ENCODE measurements at regions of chr11 and their contacts with region 1.

Region 1: DNA sequence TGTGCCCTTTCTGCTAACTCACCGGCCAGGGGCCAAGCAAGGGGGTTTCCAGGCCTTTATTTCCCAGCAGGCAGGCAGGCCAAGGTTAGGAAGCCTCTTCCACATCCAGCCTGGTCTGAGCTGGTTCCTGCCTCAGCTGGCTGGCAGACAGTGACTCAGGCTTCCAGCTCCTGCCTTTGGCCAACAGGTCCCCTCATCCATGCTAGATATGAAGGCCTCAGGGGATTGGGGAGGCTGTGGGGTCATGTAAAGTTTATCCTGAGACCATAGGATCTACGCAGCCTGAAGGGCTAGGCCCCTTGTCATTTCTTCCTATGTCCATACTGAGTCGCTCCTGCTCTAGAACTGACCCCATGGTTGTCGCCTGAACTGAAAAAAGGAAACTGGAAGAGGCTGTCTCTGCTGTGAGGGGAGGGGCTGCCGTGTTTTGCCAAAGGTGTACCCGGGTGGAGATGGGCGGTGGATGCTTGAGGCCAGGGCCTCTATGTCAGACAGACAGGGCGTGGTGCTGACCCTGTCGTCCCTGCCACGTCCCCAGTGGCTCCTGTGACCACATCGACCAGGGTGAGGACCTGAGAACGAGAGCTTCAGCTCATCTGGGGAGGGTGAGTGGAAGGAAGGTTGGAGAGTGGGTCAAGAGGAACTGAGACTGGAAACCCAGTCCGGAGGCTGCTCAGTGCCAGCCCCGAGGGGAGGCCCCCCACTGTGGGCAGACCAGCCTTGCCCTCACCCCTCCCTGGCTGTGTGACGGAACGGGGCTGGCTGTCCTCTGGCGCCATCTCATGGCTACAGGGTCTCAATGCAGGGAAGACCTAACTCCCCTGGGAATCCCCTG is 17.0 kb downstream of the P2RY6 start:
- DNase-seq: peak in 1 of 2 experiments; percentile 93
- H3K4me3 ChIP-seq: no peak overlapping the region
- H3K27ac ChIP-seq: no peak overlapping the region
- H3K4me1 ChIP-seq: peaks cover 0 to 8% (median 1%) of the 10 kb centered on the region in 4 experiments; a peak in 5 of 7 replicates
- H3K27me3 ChIP-seq: peaks cover 0 to 10% (median 3%) of the 10 kb centered on the region in 4 experiments; a peak in 5 of 7 replicates
- CTCF ChIP-seq: peak; percentile 97 to 98 (median 97)
- EP300 ChIP-seq: no peak
- POLR2A ChIP-seq: no peak
- RAD21 ChIP-seq: peak; percentile 98 to 99

Region 2: DNA sequence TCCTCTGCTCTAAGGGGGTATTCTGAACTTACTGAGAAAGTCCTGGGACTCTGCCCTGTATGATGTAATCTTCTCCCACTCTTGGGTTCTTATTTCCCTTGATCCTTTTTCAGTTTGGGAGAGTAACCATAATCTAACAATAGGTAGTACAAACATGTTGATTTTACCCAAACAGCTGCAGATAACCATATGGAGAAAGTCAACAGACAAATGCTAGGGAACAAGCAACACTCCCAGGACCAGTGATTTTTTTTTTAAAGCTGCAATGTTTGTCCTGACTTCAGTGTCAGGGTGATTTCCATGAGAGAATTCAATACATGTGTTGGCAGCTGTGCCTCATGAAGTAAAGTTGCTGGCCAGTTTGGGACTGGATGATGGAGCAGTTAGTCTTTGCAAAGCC is 303.4 kb before region 1 on chr11:
- CTCF ChIA-PET with region 1: no interaction called
- POLR2A ChIA-PET with region 1: no interaction called
- DNase-seq: no peak
- H3K4me3 ChIP-seq: no peak overlapping the region
- H3K27ac ChIP-seq: no peak overlapping the region
- H3K4me1 ChIP-seq: peaks cover 0 to 2% (median 0%) of the 10 kb centered on the region in 4 experiments; a peak in 1 of 7 replicates
- H3K27me3 ChIP-seq: no peaks in the 10 kb centered on the region
- CTCF ChIP-seq: no peak
- EP300 ChIP-seq: no peak
- POLR2A ChIP-seq: no peak
- RAD21 ChIP-seq: no peak

Region 3: DNA sequence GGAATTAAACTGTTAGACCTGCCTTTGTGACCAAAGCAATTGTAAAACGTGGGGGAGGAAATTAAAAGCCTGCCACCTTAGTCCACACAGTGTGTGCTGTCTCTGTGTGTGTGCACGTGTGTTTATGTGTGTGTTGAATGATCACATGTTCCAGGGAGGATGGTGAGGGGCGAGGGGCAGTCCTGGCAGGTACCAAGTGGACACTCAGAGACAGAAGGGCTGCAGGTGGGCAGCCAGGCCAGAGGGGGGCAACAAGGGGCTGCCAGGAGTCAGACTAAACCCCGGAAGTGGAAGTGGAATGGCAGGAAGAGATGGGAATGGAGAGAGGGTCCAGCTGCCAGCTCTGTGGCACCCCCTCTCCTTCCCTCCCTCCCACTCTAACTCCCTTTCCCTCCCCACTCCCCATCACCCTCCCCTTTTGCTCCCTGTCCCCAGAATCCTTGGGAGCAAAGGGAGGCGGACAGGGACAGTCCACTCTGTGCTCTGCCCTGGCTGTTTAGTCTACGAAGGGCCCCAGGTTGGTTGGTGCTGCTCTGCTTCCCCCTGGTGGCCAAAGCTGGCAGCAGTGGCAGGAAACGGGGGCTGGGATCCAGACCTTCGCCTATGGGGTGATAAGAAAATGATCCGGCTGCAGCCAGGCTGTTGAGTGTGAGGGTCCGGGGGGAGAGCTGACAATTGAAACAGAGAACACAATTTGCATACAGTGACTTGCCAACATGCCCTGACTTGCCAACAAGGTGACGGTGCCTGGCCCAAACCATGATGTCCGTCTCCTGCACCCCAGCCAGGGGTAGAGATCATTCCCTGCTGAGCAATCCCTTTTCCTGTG is 46.6 kb before region 1 on chr11:
- CTCF ChIA-PET with region 1: interaction called, 233 read pairs
- POLR2A ChIA-PET with region 1: no interaction called
- DNase-seq: peak in 1 of 2 experiments; percentile 97
- H3K4me3 ChIP-seq: peak overlapping the region; percentile 14 to 58 (median 22); a peak in 5 of 8 replicates
- H3K27ac ChIP-seq: peak overlapping the region; percentile 13; the same call in 1 of the 2 replicates
- H3K4me1 ChIP-seq: peaks cover 0 to 8% (median 3%) of the 10 kb centered on the region in 4 experiments; a peak in 3 of 7 replicates
- H3K27me3 ChIP-seq: no peaks in the 10 kb centered on the region
- CTCF ChIP-seq: peak; percentile 92 to 96 (median 93)
- EP300 ChIP-seq: no peak
- POLR2A ChIP-seq: peak in 1 of 2 experiments; percentile 75; a peak in 1 of 3 replicates
- RAD21 ChIP-seq: peak; percentile 80 to 85

Region 4: GRCh38 chr11:73271936-73272719 is 17.0 kb before region 1 on chr11 and contains the start of gene P2RY6:
- CTCF ChIA-PET with region 1: interaction called, 173 read pairs
- POLR2A ChIA-PET with region 1: interaction called, 5 read pairs
- DNase-seq: no peak
- H3K4me3 ChIP-seq: no peak within 1 kb of the TSS
- H3K27ac ChIP-seq: no peak within 1 kb of the TSS
- H3K4me1 ChIP-seq: peaks cover 0 to 15% (median 9%) of the 10 kb centered on the region in 4 experiments; a peak in 5 of 7 replicates
- H3K27me3 ChIP-seq: no peaks in the 10 kb centered on the region; a peak in 3 of 7 replicates
- CTCF ChIP-seq: no peak
- EP300 ChIP-seq: no peak
- POLR2A ChIP-seq: no peak
- RAD21 ChIP-seq: no peak
- total RNA-seq, gene P2RY6: not detected in 2 replicates

Region 5: GRCh38 chr11:73335204-73335923 is 46.3 kb after region 1 on chr11:
- CTCF ChIA-PET with region 1: interaction called, 113 read pairs
- POLR2A ChIA-PET with region 1: no interaction called
- DNase-seq: peak in 1 of 2 experiments; percentile 98
- H3K4me3 ChIP-seq: no peak overlapping the region
- H3K27ac ChIP-seq: no peak overlapping the region
- H3K4me1 ChIP-seq: peaks cover 10 to 32% (median 26%) of the 10 kb centered on the region in 4 experiments
- H3K27me3 ChIP-seq: peaks cover 28 to 64% (median 52%) of the 10 kb centered on the region in 4 experiments
- CTCF ChIP-seq: peak; percentile 93 to 95 (median 94)
- EP300 ChIP-seq: no peak
- POLR2A ChIP-seq: no peak
- RAD21 ChIP-seq: peak; percentile 93 to 95

Region 6: DNA sequence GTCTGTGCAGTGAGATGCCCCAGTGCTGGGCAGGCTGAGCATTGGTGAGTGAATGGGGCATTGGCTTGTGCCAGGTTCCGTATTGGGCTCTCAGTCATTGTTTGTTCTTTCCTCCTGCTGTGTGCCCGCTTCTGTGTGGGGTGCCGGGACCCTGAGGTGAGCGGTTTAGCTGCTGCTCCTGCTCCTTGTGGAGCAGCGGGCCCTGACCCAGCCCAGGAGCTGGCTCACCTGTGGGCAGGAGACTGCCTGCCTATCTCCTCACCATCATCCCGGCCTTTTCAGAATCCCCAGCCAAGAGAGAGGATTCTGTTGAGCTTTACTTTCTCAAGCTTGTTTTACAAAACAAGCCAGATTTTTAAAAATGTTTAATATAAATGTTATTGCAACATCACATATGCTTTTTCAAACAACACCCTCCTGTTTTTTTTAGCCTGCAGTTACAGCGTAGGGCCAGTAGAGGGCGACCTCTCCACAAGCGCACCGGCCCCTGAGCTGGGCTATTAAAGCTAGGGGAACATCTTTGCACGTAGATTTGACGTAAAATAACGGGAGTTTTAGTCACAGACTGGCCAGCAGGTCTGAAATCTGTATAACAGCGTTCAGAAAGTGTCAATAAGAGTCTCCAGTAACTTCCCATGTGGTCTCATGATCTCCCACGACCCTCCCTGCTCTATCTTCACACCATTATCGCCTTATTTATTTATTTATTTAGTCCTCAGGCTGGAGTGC is 62.0 kb after region 1 on chr11:
- CTCF ChIA-PET with region 1: interaction called, 35 read pairs
- POLR2A ChIA-PET with region 1: no interaction called
- DNase-seq: peak in 1 of 2 experiments; percentile 63
- H3K4me3 ChIP-seq: no peak overlapping the region
- H3K27ac ChIP-seq: no peak overlapping the region
- H3K4me1 ChIP-seq: no peaks in the 10 kb centered on the region; a peak in 2 of 7 replicates
- H3K27me3 ChIP-seq: no peaks in the 10 kb centered on the region
- CTCF ChIP-seq: peak; percentile 82 to 88 (median 85)
- EP300 ChIP-seq: no peak
- POLR2A ChIP-seq: no peak
- RAD21 ChIP-seq: peak; percentile 65 to 74

Region 7: GRCh38 chr11:73376160-73376802 is 87.2 kb after region 1 on chr11 and contains the start of gene RELT:
- CTCF ChIA-PET with region 1: interaction called, 11 read pairs
- POLR2A ChIA-PET with region 1: no interaction called
- DNase-seq: peak; percentile 71 to 100
- H3K4me3 ChIP-seq: peak within 1 kb of the TSS; percentile 48 to 88 (median 72)
- H3K27ac ChIP-seq: no peak within 1 kb of the TSS
- H3K4me1 ChIP-seq: peaks cover 3 to 13% (median 8%) of the 10 kb centered on the region in 4 experiments
- H3K27me3 ChIP-seq: peaks cover 0 to 15% (median 9%) of the 10 kb centered on the region in 4 experiments; a peak in 4 of 7 replicates
- CTCF ChIP-seq: peak in 2 of 3 experiments; percentile 87 to 96; a peak in 3 of 4 replicates
- EP300 ChIP-seq: no peak; a peak in 1 of 3 replicates
- POLR2A ChIP-seq: peak in 1 of 2 experiments; percentile 93; a peak in 2 of 3 replicates
- RAD21 ChIP-seq: peak; percentile 49 to 56
- total RNA-seq, gene RELT: 5.3 and 5.7 TPM in 2 replicates

Region 8: DNA sequence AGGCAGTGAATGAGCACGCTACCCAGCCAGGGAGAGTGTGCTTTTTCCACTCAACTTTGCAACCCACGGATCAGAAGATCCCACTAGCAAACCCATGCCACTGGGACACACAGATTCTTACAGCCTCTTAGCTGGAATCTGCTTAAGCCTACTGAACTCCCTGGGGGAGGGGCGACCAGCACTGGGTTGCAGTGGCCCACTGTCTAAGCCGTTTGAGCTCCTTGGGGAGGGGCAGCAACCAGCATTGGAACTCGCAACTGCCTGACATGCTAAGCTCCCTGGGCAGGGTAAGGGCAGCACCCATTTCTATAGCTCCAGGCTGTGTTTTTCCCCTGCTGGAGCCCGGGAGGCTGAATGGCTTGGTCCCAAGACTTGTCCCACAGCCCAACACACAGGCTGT is 209.3 kb after region 1 on chr11:
- CTCF ChIA-PET with region 1: no interaction called
- POLR2A ChIA-PET with region 1: no interaction called
- DNase-seq: no peak
- H3K4me3 ChIP-seq: no peak overlapping the region
- H3K27ac ChIP-seq: no peak overlapping the region
- H3K4me1 ChIP-seq: peaks cover 0 to 8% (median 3%) of the 10 kb centered on the region in 4 experiments; a peak in 4 of 7 replicates
- H3K27me3 ChIP-seq: no peaks in the 10 kb centered on the region
- CTCF ChIP-seq: no peak
- EP300 ChIP-seq: no peak
- POLR2A ChIP-seq: no peak
- RAD21 ChIP-seq: no peak